CD14-positive monocyte (primary cell): ENCODE measurements at regions of chr7 and their contacts with region 1.

Region 1: DNA sequence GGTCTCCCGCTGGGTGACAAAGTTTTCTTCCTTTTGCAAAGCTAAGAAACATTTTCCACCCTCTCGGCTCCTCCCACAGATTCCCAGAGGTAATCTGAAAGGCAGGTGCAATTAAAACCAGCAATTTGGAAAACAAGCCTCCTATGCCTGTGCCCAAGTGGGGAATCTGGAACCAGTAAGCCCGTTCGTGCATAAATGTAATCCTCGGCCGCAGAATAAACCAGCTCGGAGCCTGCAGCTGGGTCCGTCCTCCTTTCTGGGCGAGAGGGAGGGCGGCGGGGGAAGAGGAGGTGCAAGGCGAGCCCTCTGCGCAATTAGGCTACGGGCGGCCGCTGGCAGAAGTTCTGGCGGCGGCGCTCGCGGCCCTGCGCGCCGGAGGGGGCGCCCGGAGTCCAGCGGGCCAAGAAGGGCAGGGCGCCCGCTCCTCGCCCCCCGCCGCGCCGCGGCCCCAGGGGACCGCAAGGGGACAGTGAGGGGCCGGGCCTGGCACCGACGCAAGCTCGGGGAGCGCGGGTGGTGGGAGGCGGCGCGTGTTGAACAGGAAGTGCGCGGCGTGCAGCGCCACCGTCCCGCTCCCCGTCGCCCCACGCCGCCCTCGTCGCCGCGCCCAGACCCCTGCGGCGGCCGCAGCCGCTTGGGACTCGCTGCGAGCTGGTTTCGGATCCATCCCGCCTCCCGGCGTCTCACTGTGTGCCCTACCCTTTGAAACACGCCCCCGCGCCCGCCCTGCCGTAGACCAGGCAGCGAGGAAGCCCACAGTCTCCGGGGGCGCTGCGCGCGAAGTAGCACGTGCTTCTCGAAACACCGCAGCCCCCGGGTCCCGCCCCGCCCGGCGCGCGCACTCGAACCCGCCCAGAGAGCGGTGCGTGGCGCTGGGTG is at the start of gene PRKAG2:
- DNase-seq: peak; percentile 74 to 80 (median 74)
- H3K4me3 ChIP-seq: peak within 1 kb of the TSS; percentile 82 to 99 (median 98)
- H3K4me3 Mint-ChIP-seq: peak within 1 kb of the TSS; percentile 99
- H3K27ac ChIP-seq: peak within 1 kb of the TSS; percentile 97
- H3K27ac Mint-ChIP-seq: peak within 1 kb of the TSS; percentile 93 to 98 (median 97)
- H3K4me1 ChIP-seq: peaks cover 22 to 39% of the 10 kb centered on the region in 2 donors
- H3K4me1 Mint-ChIP-seq: peaks cover 29% of the 10 kb centered on the region
- H3K27me3 ChIP-seq: no peaks in the 10 kb centered on the region
- H3K27me3 Mint-ChIP-seq: peaks cover 0 to 3% (median 0%) of the 10 kb centered on the region in 3 donors
- CTCF ChIP-seq: peak; percentile 12
- polyA plus RNA-seq, gene PRKAG2: 29.2 to 59.8 (median 30.9) TPM

Region 2: DNA sequence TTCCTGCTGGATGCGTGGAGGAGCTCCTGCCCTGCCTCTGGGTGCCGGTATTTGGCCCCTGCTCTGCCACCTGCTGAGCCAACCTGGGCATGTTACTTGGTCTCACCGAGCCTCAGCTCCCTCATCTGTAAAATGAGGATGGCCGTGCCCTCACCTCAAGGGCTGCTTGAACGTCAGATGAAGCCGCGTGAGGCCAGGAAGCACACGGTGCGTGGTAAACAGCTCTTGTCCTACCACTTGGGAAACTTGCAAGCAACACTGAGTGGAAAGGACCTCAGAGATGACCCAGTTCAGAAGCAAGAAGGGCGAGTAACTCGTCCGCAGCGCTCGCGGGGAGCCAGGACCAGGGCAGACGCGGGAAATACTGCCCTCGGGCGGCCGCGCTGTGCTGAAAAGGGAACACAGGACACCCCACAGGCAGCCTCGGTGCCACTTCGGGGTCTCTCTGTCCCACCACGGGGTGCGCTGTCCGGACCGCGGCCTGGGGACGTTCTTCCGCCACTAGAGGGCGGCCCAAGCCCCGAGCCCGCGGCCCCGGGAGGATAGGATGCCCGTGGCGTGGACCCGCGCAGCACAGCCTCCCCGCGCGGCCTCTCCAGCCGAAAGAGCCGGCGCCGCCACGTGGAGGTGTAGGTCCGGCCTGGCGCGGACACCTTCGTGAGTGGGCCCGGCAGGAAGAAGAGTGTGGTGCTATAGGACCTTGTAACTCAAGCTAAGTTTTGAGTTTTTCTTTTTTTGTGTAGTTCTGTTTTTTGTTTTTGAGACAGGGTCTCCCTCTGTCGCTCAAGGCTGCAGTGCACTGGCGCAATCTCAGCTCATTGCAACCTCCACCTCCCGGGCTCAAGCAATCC is 94.3 kb before region 1 on chr7:
- intact Hi-C with region 1: loop called in 1 of 2 experiments (anchors 5 kb)
- DNase-seq: peak; percentile 83 to 91 (median 88)
- H3K4me3 ChIP-seq: peak overlapping the region in 1 of 3 experiments; percentile 51
- H3K4me3 Mint-ChIP-seq: peak overlapping the region; percentile 64 to 67
- H3K27ac ChIP-seq: peak overlapping the region; percentile 17 to 28
- H3K27ac Mint-ChIP-seq: peak overlapping the region; percentile 70 to 88 (median 77)
- H3K4me1 ChIP-seq: peaks cover 9 to 14% of the 10 kb centered on the region in 2 donors
- H3K4me1 Mint-ChIP-seq: peaks cover 24% of the 10 kb centered on the region
- H3K27me3 ChIP-seq: no peaks in the 10 kb centered on the region
- H3K27me3 Mint-ChIP-seq: peaks cover 0 to 2% (median 1%) of the 10 kb centered on the region in 3 donors
- CTCF ChIP-seq: peak; percentile 98

Region 3: GRCh38 chr7:151838861-151839391 is 38.2 kb before region 1 on chr7:
- intact Hi-C with region 1: loop called in 1 of 2 experiments (anchors 5 kb)
- DNase-seq: peak; percentile 77 to 84 (median 78)
- H3K4me3 ChIP-seq: peak overlapping the region in 1 of 3 experiments; percentile 65
- H3K4me3 Mint-ChIP-seq: peak overlapping the region; percentile 69 to 82
- H3K27ac ChIP-seq: peak overlapping the region; percentile 81 to 88
- H3K27ac Mint-ChIP-seq: peak overlapping the region; percentile 94 to 97 (median 95)
- H3K4me1 ChIP-seq: peaks cover 51 to 53% of the 10 kb centered on the region in 2 donors
- H3K4me1 Mint-ChIP-seq: peaks cover 54% of the 10 kb centered on the region
- H3K27me3 ChIP-seq: no peaks in the 10 kb centered on the region
- H3K27me3 Mint-ChIP-seq: peaks cover 0 to 6% (median 0%) of the 10 kb centered on the region in 3 donors
- CTCF ChIP-seq: no peak

Region 4: GRCh38 chr7:151925446-151926335 is 48.6 kb after region 1 on chr7:
- intact Hi-C with region 1: loop called in 1 of 2 experiments (anchors 5 kb)
- DNase-seq: peak; percentile 78 to 86 (median 85)
- H3K4me3 ChIP-seq: peak overlapping the region in 1 of 3 experiments; percentile 46
- H3K4me3 Mint-ChIP-seq: peak overlapping the region; percentile 45 to 78
- H3K27ac ChIP-seq: peak overlapping the region; percentile 99 to 100
- H3K27ac Mint-ChIP-seq: peak overlapping the region; percentile 98 to 100 (median 100)
- H3K4me1 ChIP-seq: peaks cover 69 to 70% of the 10 kb centered on the region in 2 donors
- H3K4me1 Mint-ChIP-seq: peaks cover 65% of the 10 kb centered on the region
- H3K27me3 ChIP-seq: no peaks in the 10 kb centered on the region
- H3K27me3 Mint-ChIP-seq: peaks cover 0 to 2% (median 0%) of the 10 kb centered on the region in 3 donors
- CTCF ChIP-seq: no peak

Region 5: GRCh38 chr7:151936207-151936606 is 59.1 kb after region 1 on chr7:
- intact Hi-C with region 1: loop called (anchors 2 kb)
- DNase-seq: peak; percentile 65 to 87 (median 85)
- H3K4me3 ChIP-seq: peak overlapping the region in 1 of 3 experiments; percentile 61
- H3K4me3 Mint-ChIP-seq: peak overlapping the region; percentile 56 to 81
- H3K27ac ChIP-seq: peak overlapping the region; percentile 92 to 93
- H3K27ac Mint-ChIP-seq: peak overlapping the region; percentile 97 to 99 (median 98)
- H3K4me1 ChIP-seq: peaks cover 90 to 91% of the 10 kb centered on the region in 2 donors
- H3K4me1 Mint-ChIP-seq: peaks cover 86% of the 10 kb centered on the region
- H3K27me3 ChIP-seq: no peaks in the 10 kb centered on the region
- H3K27me3 Mint-ChIP-seq: peaks cover 0 to 5% (median under 1%) of the 10 kb centered on the region in 3 donors
- CTCF ChIP-seq: no peak

Region 6: DNA sequence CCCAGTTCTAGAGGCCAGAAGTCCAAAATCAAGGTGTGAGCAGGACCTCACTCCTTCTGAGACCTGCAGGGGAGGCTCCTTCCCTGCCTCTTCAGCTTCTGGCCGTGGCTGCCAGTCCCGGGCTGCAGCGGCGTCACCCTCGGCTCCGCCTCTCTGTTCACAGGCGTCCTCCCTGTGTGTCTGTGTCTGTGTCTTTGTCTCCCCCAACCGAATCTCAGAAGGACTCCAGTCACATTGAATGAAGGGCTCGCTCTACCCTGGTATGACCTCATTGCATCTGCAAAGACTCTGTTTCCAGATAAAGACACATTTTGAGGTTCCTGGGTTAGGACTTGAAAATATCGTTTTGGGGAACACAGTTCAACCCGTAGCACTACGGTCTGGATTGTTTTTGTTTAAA is 115.2 kb after region 1 on chr7:
- intact Hi-C with region 1: loop called in 1 of 2 experiments (anchors 10 kb)
- DNase-seq: peak; percentile 57 to 68 (median 63)
- H3K4me3 ChIP-seq: no peak overlapping the region
- H3K4me3 Mint-ChIP-seq: peak overlapping the region in 1 of 2 donors; percentile 35
- H3K27ac ChIP-seq: no peak overlapping the region
- H3K27ac Mint-ChIP-seq: peak overlapping the region in 1 of 7 donors; percentile 69
- H3K4me1 ChIP-seq: peaks cover 11 to 13% of the 10 kb centered on the region in 2 donors
- H3K4me1 Mint-ChIP-seq: peaks cover 10% of the 10 kb centered on the region
- H3K27me3 ChIP-seq: no peaks in the 10 kb centered on the region
- H3K27me3 Mint-ChIP-seq: peaks cover 4 to 13% (median 5%) of the 10 kb centered on the region in 3 donors
- CTCF ChIP-seq: peak; percentile 37